ENCODE measurements at regions of chrX and their contacts with region 1.

Region 1: GRCh38 chrX:17380221-17380620 is 5.2 kb downstream of the NHS start:
- DNase-seq: no peak
- ATAC-seq: no peak

Region 2: GRCh38 chrX:17262123-17262522 is 118.1 kb before region 1 on chrX:
- intact Hi-C with region 1: no loop called
- DNase-seq: no peak
- ATAC-seq: no peak

Region 3: GRCh38 chrX:17435466-17435865 is 55.2 kb after region 1 on chrX:
- intact Hi-C with region 1: no loop called
- DNase-seq: no peak
- ATAC-seq: peak; percentile 48

Region 4: GRCh38 chrX:17590892-17591740 is 210.9 kb after region 1 on chrX:
- intact Hi-C with region 1: loop called in 1 of 2 experiments (anchors 10 kb)
- DNase-seq: peak; percentile 32 to 54
- ATAC-seq: peak; percentile 82

Region 5: GRCh38 chrX:17706676-17707075 is 326.5 kb after region 1 on chrX:
- intact Hi-C with region 1: no loop called
- DNase-seq: no peak
- ATAC-seq: no peak

Measured in left colon (tissue), 2 donors.